GM23248 (cell line): ENCODE measurements at regions of chr10 and their contacts with region 1.

Region 1: DNA sequence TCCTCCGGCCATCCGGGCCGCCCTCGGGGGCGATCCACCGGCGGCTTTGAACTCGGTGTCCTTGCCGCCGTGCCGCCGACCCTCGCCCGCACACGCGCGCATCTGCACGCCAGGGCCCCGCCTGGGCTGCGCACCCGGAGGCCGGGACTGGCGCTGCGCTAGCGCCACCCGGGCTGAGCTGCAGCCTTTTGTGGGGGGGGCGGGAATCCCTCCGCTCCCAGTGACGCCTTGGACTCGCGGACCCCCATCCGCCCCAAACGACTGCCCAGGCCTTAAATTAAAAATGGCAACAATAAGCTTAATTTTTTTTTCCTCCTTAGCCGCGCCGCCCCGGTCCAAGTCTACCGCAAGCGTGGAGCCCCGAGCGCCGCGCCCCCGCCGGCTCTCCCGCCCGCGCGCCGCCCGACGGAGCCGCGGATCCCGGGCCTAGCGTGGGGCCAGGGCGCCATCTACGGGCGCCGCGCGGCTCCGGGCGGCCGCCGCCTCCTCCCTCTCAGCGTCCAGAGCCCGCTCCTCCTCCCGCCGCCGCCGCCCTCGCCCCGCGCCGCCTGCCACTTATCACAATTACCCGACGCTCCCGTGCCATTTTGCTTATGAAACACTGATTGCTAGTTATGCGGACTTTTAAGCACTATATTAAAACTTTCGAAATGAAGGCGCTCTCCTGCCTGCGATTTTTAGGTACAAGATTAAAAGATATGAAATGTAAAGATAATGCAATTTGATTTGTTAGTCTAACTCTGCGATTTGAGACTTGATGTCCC is 7.5 kb upstream of the EBF3 start:
- DNase-seq: peak; percentile 81
- H3K4me3 ChIP-seq: peak overlapping the region; percentile 62
- H3K27ac ChIP-seq: no peak overlapping the region
- H3K4me1 ChIP-seq: peaks cover 7% of the 10 kb centered on the region; the same call in 1 of the 2 replicates
- H3K27me3 ChIP-seq: peaks cover 61% of the 10 kb centered on the region

Region 2: GRCh38 chr10:129030996-129031843 is 940.3 kb before region 1 on chr10:
- in situ Hi-C with region 1: loop called (anchors 25 kb)
- DNase-seq: peak; percentile 67
- H3K4me3 ChIP-seq: no peak overlapping the region
- H3K27ac ChIP-seq: no peak overlapping the region
- H3K4me1 ChIP-seq: no peaks in the 10 kb centered on the region
- H3K27me3 ChIP-seq: 0 out of 2 replicates have a peak, but pooled peaks cover 8% of the 10 kb centered on the region

Region 3: GRCh38 chr10:129853562-129853903 is 118.0 kb before region 1 on chr10:
- in situ Hi-C with region 1: no loop called
- DNase-seq: peak; percentile 40
- H3K4me3 ChIP-seq: no peak overlapping the region
- H3K27ac ChIP-seq: no peak overlapping the region
- H3K4me1 ChIP-seq: no peaks in the 10 kb centered on the region
- H3K27me3 ChIP-seq: no peaks in the 10 kb centered on the region

Region 4: GRCh38 chr10:130378556-130379400 is 407.2 kb after region 1 on chr10:
- in situ Hi-C with region 1: no loop called
- DNase-seq: no peak
- H3K4me3 ChIP-seq: no peak overlapping the region
- H3K27ac ChIP-seq: no peak overlapping the region
- H3K4me1 ChIP-seq: no peaks in the 10 kb centered on the region
- H3K27me3 ChIP-seq: no peaks in the 10 kb centered on the region